ENCODE measurements at regions of chr9 and their contacts with region 1.

Region 1: DNA sequence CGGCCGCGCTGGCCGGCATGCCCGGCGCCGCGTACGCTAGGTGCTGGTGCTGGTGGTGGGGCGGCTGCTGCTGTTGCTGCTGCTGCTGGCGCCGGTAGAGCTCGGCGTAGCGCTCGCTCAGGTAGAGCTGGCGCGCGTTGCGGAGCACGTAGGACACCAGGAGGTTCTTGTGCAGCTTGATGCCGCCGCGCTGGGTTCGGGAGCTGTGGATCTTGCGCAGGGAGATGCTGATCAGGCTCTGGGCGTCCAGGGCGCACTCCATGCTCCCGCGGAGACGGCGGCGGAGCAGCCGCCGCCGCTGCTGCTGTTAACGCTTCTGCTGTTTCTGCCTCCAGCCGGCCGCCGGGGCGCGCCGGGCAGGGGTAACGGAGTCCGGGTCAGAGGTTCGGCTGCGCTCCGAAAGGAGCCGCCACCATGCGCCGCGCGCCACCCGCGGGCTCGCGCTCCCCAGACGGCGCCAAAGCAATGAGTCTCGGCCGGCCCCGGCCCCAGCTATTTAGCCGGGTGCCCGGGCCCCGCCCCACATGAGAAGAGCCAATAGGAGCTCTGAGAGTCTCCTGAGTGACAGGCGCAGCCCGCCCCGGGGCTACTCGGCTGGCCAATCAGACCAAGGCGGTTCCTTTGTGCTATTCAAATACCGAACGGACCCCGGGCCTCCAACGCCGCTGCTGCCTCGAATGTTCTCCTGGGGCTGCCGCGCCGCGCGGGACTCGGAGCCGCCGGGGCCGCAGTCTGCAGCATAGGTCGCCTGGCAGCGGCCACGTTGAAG is at the start of gene IER5L:
- DNase-seq: peak; percentile 94
- H3K4me3 Mint-ChIP-seq: peak within 1 kb of the TSS; percentile 85
- H3K27ac Mint-ChIP-seq: peak within 1 kb of the TSS; percentile 75
- H3K4me1 Mint-ChIP-seq: peaks cover 21% of the 10 kb centered on the region
- H3K27me3 Mint-ChIP-seq: peaks cover 8% of the 10 kb centered on the region
- total RNA-seq, gene IER5L: 1.8 to 2.3 TPM

Region 2: GRCh38 chr9:129139993-129140396 is 38.0 kb before region 1 on chr9:
- CTCF ChIA-PET with region 1: interaction called, 18 read pairs
- POLR2A ChIA-PET with region 1: no interaction called
- DNase-seq: peak; percentile 85
- H3K4me3 Mint-ChIP-seq: peak overlapping the region; percentile 75
- H3K27ac Mint-ChIP-seq: peak overlapping the region; percentile 93
- H3K4me1 Mint-ChIP-seq: peaks cover 44% of the 10 kb centered on the region
- H3K27me3 Mint-ChIP-seq: no peaks in the 10 kb centered on the region

Region 3: GRCh38 chr9:129148463-129149204 is 29.3 kb before region 1 on chr9:
- CTCF ChIA-PET with region 1: interaction called, 18 read pairs
- POLR2A ChIA-PET with region 1: no interaction called
- DNase-seq: no peak
- H3K4me3 Mint-ChIP-seq: no peak overlapping the region
- H3K27ac Mint-ChIP-seq: no peak overlapping the region
- H3K4me1 Mint-ChIP-seq: peaks cover 9% of the 10 kb centered on the region
- H3K27me3 Mint-ChIP-seq: no peaks in the 10 kb centered on the region

Region 4: DNA sequence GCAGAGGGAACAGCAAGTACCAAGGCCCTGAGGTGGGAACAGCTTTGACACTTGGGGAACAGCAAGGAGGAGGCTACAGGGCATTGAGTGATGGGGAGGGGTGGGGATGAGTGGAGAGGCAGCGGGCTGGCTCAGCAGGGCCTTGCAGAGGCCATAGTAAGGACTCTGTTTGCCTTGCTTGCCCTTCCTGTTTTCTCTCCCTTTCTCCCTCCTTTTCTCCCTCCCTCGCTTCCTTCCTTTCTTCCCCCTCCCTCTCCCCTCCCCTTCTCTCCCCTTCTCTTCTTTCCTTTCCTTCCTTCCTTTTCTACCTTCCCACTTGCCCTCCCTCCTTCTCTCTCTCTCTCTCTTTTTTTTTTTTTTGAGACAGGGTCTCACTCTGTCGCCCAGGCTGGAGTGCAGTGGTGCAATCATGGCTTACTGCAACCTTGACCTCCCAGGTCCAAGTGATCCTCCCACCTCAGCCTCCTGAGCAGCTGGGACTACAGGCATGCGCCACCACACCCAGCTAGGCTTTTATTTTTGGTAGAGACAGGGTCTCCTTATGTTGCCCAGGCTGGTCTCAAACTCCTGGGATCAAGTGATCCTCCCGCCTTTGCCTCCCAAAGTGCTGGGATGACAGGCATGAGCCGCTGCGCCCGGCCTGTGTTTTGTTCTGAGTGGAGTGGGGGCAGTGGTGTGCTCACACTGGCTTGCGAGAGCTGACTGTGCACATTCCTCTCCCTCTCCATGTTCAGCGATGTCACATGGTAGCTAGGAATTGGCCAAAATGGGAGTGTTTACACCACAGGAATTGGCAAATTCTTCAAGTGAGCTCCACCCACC is 17.1 kb before region 1 on chr9:
- CTCF ChIA-PET with region 1: interaction called, 26 read pairs
- POLR2A ChIA-PET with region 1: interaction called, 4 read pairs
- DNase-seq: no peak
- H3K4me3 Mint-ChIP-seq: no peak overlapping the region
- H3K27ac Mint-ChIP-seq: no peak overlapping the region
- H3K4me1 Mint-ChIP-seq: no peaks in the 10 kb centered on the region
- H3K27me3 Mint-ChIP-seq: no peaks in the 10 kb centered on the region

Region 5: GRCh38 chr9:129166623-129167557 is 11.1 kb before region 1 on chr9:
- CTCF ChIA-PET with region 1: interaction called, 26 read pairs
- POLR2A ChIA-PET with region 1: no interaction called
- DNase-seq: peak; percentile 26
- H3K4me3 Mint-ChIP-seq: peak overlapping the region; percentile 40
- H3K27ac Mint-ChIP-seq: peak overlapping the region; percentile 42
- H3K4me1 Mint-ChIP-seq: peaks cover 37% of the 10 kb centered on the region
- H3K27me3 Mint-ChIP-seq: peaks cover 1% of the 10 kb centered on the region

Region 6: DNA sequence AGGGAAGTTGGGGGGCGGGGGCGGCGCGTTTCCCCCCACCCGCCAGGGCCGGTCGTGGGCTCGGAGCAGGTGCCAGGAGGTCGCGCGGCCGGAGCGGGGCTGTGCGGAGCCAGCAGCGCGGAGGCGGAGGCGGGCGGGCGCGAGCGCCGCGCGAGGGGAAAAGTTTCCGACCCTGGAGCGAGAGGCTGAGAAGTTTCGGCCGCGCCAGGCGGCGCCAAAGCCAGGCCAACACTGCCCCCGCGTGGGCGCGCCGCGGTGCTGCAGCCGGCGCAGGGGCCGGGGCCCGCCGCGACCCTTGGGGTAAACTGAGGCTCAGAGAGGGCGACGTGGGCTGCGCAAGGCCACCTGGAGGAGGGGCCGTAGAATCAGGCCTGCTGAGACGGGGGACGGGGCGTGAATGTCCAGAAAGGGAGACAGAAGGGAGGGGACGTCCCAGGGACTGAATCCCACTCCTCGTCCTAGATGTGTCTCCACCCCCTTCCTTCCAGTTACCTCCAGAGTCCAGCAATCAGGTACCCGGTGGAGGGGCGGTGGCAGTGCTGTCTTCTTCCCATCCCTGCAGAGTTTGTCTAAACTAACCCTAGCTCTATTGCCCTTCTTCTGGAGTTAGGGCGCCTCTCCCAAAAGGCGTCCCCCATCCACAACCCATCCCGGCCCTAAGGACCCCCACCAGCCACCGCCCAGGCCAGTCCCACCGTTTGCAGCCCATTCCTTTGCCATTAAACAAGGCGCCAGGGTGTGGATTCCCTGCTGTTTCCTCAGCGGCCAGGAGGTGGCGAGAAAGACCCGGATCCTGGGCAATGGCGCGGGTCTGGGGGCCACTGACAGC is 432.7 kb after region 1 on chr9:
- CTCF ChIA-PET with region 1: interaction called, 11 read pairs
- POLR2A ChIA-PET with region 1: no interaction called
- DNase-seq: peak; percentile 72
- H3K4me3 Mint-ChIP-seq: peak overlapping the region; percentile 71
- H3K27ac Mint-ChIP-seq: peak overlapping the region; percentile 75
- H3K4me1 Mint-ChIP-seq: peaks cover 42% of the 10 kb centered on the region
- H3K27me3 Mint-ChIP-seq: peaks cover under 1% of the 10 kb centered on the region

Region 7: DNA sequence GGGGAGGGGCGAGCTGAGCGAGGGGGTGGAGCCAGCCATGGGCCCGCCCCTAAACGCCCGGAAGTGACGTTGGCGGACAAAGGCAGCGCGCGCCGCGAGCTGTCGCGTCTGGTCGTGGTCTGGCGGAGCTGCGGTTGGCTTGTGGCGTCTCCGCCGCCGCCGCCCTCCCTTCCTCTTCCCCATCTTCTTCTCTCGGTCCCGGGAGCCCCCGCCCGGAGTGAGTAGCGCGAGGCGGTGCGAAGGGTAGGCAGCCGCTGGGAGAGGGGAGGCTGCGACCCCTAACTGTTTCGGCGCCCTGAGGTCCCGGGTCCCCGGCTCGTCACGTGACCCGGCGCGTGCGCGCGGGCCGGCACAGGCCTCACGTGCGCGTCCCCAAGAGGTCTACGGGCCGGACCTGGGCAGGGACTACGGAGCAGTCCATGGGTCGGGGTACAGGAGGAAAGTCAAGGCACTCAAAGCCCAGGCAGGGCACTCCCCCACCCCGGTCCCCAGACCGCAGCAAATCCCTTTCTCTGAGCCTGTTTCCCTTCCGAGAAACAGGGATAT is 448.2 kb after region 1 on chr9 and contains the start of gene NTMT1:
- CTCF ChIA-PET with region 1: interaction called, 32 read pairs
- POLR2A ChIA-PET with region 1: no interaction called
- DNase-seq: peak; percentile 88
- H3K4me3 Mint-ChIP-seq: peak within 1 kb of the TSS; percentile 88
- H3K27ac Mint-ChIP-seq: peak within 1 kb of the TSS; percentile 99
- H3K4me1 Mint-ChIP-seq: peaks cover 54% of the 10 kb centered on the region
- H3K27me3 Mint-ChIP-seq: peaks cover 5% of the 10 kb centered on the region
- total RNA-seq, gene NTMT1: 28.5 to 33.9 TPM

Region 8: GRCh38 chr9:130138171-130138653 is 960.2 kb after region 1 on chr9:
- CTCF ChIA-PET with region 1: no interaction called
- POLR2A ChIA-PET with region 1: no interaction called
- DNase-seq: no peak
- H3K4me3 Mint-ChIP-seq: no peak overlapping the region
- H3K27ac Mint-ChIP-seq: peak overlapping the region; percentile 64
- H3K4me1 Mint-ChIP-seq: peaks cover 49% of the 10 kb centered on the region
- H3K27me3 Mint-ChIP-seq: peaks cover under 1% of the 10 kb centered on the region